Endothelial cell of umbilical vein (primary cell): ENCODE measurements at regions of chr6 and their contacts with region 1.

Region 1: DNA sequence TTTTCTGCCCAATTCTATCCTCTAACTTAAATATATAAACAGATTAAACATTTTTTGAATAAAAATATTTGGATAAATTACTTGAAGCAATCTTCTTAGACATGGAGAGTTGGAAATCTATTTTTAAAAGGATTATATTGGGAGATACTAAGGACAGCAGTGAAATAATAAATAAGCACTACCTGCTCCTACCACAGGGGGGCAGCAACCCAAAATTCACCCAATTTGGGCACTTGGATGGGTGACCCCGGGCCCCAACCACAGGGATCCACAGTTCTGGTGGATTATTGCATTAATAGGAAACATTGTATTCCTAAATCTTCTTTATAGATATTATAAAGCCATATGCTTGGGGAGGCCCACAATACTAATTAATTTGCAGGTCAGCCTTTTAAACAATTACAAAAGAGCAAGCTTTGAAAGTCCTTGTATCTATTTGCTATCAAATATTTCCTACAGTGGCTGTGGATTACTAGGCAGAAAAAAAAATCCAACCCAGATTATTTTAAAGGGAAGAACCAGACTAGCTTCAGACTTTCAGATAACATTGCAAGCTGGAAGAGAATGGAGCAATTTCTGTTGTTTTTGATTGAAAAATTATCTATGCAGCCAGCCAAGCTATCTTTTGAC is 66.4 kb upstream of the PDE10A start:
- DNase-seq: peak; percentile 40
- H3K4me3 ChIP-seq: no peak overlapping the region
- H3K27ac ChIP-seq: no peak overlapping the region
- H3K4me1 ChIP-seq: no peaks in the 10 kb centered on the region
- H3K27me3 ChIP-seq: peaks cover 4% of the 10 kb centered on the region in 2 experiments
- CTCF ChIP-seq: peak; percentile 60 to 70
- POLR2A ChIP-seq: no peak

Region 2: DNA sequence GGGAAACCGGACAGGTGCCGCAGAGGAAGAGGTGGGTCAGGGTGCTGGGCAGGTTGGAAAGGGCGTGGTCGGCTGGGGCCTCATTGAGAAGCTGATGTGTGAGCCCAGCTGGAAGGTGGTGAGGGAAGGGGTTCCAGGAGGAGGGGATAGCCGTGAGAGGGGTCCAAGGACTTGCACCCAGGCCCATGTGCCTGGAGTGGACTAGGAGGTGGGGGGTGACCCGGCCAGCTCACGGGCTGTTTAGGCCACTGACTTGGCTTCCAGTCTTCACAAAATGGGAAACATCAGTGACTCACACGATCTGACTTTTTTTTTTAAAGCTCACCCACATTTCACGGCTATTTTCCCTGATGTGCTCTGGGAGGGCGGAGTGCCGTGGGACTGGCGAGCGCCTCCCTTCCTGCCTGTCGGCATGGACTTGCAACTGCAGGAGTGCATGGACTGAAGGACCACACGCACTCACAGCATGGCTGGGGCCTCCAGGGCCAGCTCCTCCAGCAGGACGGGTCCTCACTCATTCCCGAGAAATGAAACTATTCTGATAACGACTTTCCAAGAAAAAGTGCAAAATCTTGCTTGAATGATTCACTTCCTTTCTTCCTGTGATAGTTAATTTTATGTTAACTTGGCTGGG is 52.9 kb before region 1 on chr6:
- CTCF ChIA-PET with region 1: interaction called, 11 read pairs
- POLR2A ChIA-PET with region 1: no interaction called
- dilution Hi-C with region 1: no loop called
- intact Hi-C with region 1: loop called (anchors 2 kb)
- DNase-seq: peak; percentile 89
- H3K4me3 ChIP-seq: no peak overlapping the region
- H3K27ac ChIP-seq: peak overlapping the region; percentile 25
- H3K4me1 ChIP-seq: peaks cover 9% of the 10 kb centered on the region
- H3K27me3 ChIP-seq: no peaks in the 10 kb centered on the region
- CTCF ChIP-seq: peak; percentile 32 to 68
- POLR2A ChIP-seq: no peak

Region 3: DNA sequence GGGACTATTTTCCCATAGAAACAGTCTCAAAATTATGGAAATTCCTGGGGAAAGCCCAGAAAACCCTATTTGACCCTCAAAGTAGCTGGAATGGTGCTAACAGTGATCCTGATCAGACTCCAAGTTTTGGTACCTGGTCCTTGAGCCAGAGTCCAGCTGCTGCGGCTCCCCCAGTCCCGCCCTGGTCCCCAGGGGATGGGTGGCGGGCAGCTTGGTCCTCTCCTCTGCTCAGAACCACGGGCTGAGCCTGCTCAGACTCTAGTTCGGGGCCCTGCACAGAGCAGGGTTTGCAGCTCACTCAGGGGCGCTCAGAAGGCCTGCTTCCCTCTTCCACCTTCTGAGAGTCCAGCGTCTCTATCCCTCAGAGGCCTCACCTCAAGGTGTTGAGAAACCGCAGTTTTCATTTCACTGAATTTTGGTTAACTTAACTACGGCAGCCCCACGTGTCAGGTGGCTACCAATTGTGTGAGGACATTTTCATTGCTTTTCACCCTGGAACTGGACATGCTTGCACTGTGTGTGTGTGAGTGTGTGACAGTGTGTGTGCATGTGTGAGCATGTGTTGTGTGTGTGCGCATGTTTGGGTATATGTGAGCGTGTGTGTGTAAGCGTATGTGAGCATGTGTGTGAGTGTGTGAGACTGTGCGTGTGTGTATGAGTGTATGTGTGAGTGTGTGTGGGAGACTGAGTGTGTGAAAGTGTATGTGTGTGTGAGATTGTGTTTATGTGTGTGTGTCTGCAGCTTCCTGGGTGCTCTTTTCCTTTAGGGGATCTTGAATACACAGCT is 22.2 kb before region 1 on chr6:
- CTCF ChIA-PET with region 1: interaction called, 12 read pairs
- POLR2A ChIA-PET with region 1: no interaction called
- dilution Hi-C with region 1: no loop called
- intact Hi-C with region 1: no loop called
- DNase-seq: no peak
- H3K4me3 ChIP-seq: no peak overlapping the region
- H3K27ac ChIP-seq: no peak overlapping the region
- H3K4me1 ChIP-seq: no peaks in the 10 kb centered on the region
- H3K27me3 ChIP-seq: peaks cover 0 to 2% of the 10 kb centered on the region in 2 experiments
- CTCF ChIP-seq: no peak
- POLR2A ChIP-seq: no peak

Region 4: GRCh38 chr6:165744555-165745228 is 15.3 kb after region 1 on chr6:
- CTCF ChIA-PET with region 1: interaction called, 17 read pairs
- POLR2A ChIA-PET with region 1: no interaction called
- dilution Hi-C with region 1: no loop called
- intact Hi-C with region 1: no loop called
- DNase-seq: no peak
- H3K4me3 ChIP-seq: no peak overlapping the region
- H3K27ac ChIP-seq: no peak overlapping the region
- H3K4me1 ChIP-seq: no peaks in the 10 kb centered on the region
- H3K27me3 ChIP-seq: no peaks in the 10 kb centered on the region
- CTCF ChIP-seq: no peak
- POLR2A ChIP-seq: no peak

Region 5: GRCh38 chr6:165774903-165775601 is 45.6 kb after region 1 on chr6:
- CTCF ChIA-PET with region 1: interaction called, 18 read pairs
- POLR2A ChIA-PET with region 1: no interaction called
- dilution Hi-C with region 1: no loop called
- intact Hi-C with region 1: loop called (anchors 1 kb)
- DNase-seq: peak; percentile 99
- H3K4me3 ChIP-seq: peak overlapping the region in 1 of 3 experiments; percentile 5
- H3K27ac ChIP-seq: peak overlapping the region; percentile 92
- H3K4me1 ChIP-seq: peaks cover 12% of the 10 kb centered on the region
- H3K27me3 ChIP-seq: peaks cover 0 to 1% of the 10 kb centered on the region in 2 experiments
- CTCF ChIP-seq: no peak
- POLR2A ChIP-seq: no peak